IMR-90 (cell line): ENCODE measurements at regions of chr21 and their contacts with region 1.

Region 1: DNA sequence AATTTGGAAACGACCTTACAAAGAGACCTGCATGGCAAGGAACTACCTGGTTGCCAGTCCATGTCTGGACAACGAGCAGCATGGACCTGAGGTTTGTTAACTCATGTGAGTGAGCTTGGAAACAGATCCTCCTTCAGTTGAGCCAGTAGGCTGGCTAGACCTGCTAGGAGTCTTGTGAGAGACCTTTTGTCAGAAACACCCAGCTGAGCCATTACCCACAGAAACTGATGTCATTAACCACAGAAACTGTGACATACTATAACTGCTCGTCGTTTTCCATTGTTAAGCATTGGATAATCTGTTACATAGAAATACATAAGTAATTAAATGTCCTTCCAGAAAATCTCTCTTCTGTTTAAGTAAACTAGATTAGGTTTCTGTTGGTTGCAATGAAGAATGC is 211.1 kb upstream of the C21orf91 start:
- DNase-seq: no peak
- ATAC-seq: no peak
- H3K4me3 ChIP-seq: no peak overlapping the region
- H3K27ac ChIP-seq: no peak overlapping the region
- H3K4me1 ChIP-seq: no peaks in the 10 kb centered on the region
- H3K27me3 ChIP-seq: no peaks in the 10 kb centered on the region
- CTCF ChIP-seq: no peak
- POLR2A ChIP-seq: no peak
- RAD21 ChIP-seq: no peak

Region 2: DNA sequence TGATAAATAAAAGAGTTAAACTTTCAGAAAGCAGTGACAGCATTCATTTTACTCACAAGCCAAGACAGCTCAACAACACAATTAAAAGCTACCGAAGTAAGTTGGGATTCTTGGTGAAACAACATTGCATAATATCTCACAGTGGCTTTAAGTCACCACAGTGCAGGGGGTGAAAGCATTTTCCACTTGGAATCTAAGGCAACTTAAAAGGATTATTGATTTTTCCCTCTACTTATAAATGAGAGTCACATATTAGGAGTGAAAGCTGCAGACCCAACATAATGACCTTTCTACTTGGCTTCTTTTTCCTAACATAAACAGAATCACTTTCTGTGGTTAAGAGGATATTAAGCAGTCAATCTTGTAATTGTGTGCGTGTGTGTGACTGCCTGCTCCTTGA is 1054.1 kb before region 1 on chr21:
- CTCF ChIA-PET with region 1: no interaction called
- POLR2A ChIA-PET with region 1: no interaction called
- dilution Hi-C with region 1: no loop called
- in situ Hi-C with region 1: no loop called
- intact Hi-C with region 1: no loop called
- DNase-seq: no peak
- ATAC-seq: no peak
- H3K4me3 ChIP-seq: no peak overlapping the region
- H3K27ac ChIP-seq: no peak overlapping the region
- H3K4me1 ChIP-seq: no peaks in the 10 kb centered on the region
- H3K27me3 ChIP-seq: no peaks in the 10 kb centered on the region
- CTCF ChIP-seq: no peak
- POLR2A ChIP-seq: no peak
- RAD21 ChIP-seq: no peak

Region 3: GRCh38 chr21:17780539-17780938 is 249.7 kb before region 1 on chr21:
- CTCF ChIA-PET with region 1: no interaction called
- POLR2A ChIA-PET with region 1: no interaction called
- dilution Hi-C with region 1: no loop called
- in situ Hi-C with region 1: no loop called
- intact Hi-C with region 1: no loop called
- DNase-seq: no peak
- ATAC-seq: no peak
- H3K4me3 ChIP-seq: no peak overlapping the region
- H3K27ac ChIP-seq: no peak overlapping the region
- H3K4me1 ChIP-seq: no peaks in the 10 kb centered on the region
- H3K27me3 ChIP-seq: no peaks in the 10 kb centered on the region
- CTCF ChIP-seq: no peak
- POLR2A ChIP-seq: no peak
- RAD21 ChIP-seq: no peak

Region 4: DNA sequence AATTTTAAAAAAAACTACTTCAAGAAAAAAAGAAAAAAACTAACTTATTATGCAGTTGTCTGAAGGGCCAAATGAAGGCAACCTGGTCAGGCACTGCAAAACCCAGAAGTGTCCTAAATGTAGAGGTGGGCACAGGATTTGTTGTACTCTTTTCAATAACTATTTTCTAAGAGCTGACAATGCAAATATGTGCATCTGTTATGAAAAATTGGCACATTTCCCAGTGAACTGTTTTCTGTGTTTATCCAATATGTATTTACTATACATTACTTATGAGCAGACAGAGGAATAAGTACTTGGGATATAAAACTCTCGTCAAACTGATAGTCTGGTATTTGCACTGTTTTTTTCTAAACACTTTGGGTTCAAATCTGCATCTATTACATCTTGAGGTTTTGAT is 23.1 kb before region 1 on chr21:
- CTCF ChIA-PET with region 1: no interaction called
- POLR2A ChIA-PET with region 1: no interaction called
- dilution Hi-C with region 1: no loop called
- in situ Hi-C with region 1: no loop called
- intact Hi-C with region 1: loop called (anchors 1 kb)
- DNase-seq: no peak
- ATAC-seq: no peak
- H3K4me3 ChIP-seq: no peak overlapping the region
- H3K27ac ChIP-seq: no peak overlapping the region
- H3K4me1 ChIP-seq: no peaks in the 10 kb centered on the region
- H3K27me3 ChIP-seq: no peaks in the 10 kb centered on the region
- CTCF ChIP-seq: no peak
- POLR2A ChIP-seq: no peak
- RAD21 ChIP-seq: no peak

Region 5: DNA sequence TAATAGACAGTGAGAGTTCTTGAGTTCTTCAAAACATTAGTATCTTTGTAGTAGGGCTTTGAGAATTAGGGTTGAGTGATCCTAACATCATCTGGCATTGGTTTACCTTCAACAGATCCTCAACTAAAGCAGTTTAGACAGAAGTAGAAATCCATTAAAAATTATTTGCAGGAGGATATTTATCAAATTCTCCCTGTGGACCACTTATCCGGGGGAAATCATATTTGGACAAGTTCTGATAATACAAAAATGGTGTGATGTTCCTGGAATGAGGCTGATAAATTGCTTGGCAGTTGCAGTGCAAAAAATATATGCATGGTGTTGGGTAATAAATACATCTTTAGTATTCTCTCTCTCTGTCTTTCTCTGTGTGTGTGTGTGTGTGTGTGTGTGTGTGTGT is 99.3 kb after region 1 on chr21:
- CTCF ChIA-PET with region 1: no interaction called
- POLR2A ChIA-PET with region 1: no interaction called
- dilution Hi-C with region 1: no loop called
- in situ Hi-C with region 1: no loop called
- intact Hi-C with region 1: no loop called
- DNase-seq: no peak
- ATAC-seq: no peak
- H3K4me3 ChIP-seq: no peak overlapping the region
- H3K27ac ChIP-seq: no peak overlapping the region
- H3K4me1 ChIP-seq: no peaks in the 10 kb centered on the region
- H3K27me3 ChIP-seq: no peaks in the 10 kb centered on the region
- CTCF ChIP-seq: no peak
- POLR2A ChIP-seq: no peak
- RAD21 ChIP-seq: no peak